Activated B cell treated with CpG ODN at 0.5 μM for 24 hours (primary cell): ENCODE measurements at regions of chr1 and their contacts with region 1.

Region 1: DNA sequence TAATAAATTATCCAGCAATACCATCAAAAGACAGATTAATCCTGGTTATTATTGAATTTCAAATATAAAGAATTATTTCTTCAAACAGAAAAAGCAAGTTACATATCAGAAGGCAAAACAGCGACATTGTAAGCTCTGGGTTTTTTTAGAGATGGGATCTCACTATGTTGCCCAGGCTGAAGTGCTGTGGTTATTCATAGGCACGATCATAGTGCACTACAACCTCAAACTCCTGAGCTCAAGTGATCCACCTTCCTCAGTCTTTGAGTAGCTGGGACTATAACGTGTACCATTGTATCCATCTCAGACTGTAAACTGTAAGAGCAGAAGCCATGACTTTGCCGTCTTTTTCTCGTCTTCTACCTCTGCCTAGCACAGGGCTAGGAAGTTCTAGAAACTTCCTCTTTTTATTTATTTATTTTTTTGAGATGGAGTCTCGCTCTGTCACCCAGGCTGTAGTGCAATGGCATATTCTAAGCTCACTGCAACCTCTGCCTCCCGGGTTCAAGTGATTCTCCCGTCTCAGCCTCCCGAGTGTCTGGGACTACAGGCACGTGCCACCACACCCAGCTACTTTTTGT is 20.0 kb upstream of the GPX7 start:
- DNase-seq: no peak
- ATAC-seq: no peak
- H3K4me3 Mint-ChIP-seq: no peak overlapping the region
- H3K27ac Mint-ChIP-seq: no peak overlapping the region
- H3K4me1 Mint-ChIP-seq: peaks cover 7% of the 10 kb centered on the region
- H3K27me3 Mint-ChIP-seq: no peaks in the 10 kb centered on the region
- CTCF ChIP-seq: no peak

Region 2: DNA sequence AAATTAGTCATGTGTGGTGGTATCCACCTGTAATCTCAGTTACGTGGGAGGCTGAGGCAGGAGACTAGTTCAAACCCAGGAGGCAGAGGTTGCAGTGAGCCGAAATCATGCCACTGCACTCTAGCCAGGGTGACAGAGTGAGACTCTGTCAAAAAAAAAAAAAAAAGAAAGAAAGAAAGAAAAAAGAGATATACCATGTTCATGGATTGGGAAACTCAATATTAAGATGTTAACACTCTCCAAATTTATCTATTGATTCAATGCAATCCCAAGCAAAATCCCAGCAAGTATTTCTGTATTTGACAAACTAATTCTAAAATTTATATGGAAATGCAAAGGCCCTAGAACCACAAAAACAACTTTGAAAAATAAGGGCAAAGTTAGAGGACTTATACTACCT is 39.7 kb after region 1 on chr1:
- CTCF ChIA-PET with region 1: no interaction called
- POLR2A ChIA-PET with region 1: no interaction called
- intact Hi-C with region 1: loop called (anchors 1 kb)
- DNase-seq: no peak
- ATAC-seq: no peak
- H3K4me3 Mint-ChIP-seq: no peak overlapping the region
- H3K27ac Mint-ChIP-seq: no peak overlapping the region
- H3K4me1 Mint-ChIP-seq: peaks cover 22% of the 10 kb centered on the region
- H3K27me3 Mint-ChIP-seq: no peaks in the 10 kb centered on the region
- CTCF ChIP-seq: no peak